Left ventricle myocardium superior (tissue), 1 donor: ENCODE measurements at regions of chr13 and their contacts with region 1.

Region 1: GRCh38 chr13:61148691-61149315 is 266.8 kb downstream of the PCDH20 start:
- DNase-seq: no peak
- ATAC-seq: peak; percentile 61

Region 2: DNA sequence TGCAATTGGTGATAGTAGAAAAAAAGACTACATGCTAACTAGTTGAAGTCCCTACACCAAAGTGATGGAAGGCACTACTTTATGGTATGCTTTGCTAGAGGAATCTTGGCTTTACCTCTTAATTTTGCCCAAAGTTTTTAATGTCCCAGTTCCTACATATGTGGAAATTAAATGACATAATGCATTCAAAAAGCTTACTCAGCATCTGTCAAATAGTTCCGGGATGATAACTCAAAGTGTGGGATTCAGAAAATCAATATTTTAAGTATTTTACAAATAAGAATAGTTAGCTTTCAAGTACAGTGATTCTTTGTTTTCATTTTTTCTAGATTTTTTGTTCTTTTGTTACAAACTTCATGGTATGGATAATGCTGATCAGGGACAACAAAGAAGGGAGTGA is 55.2 kb after region 1 on chr13:
- intact Hi-C with region 1: loop called (anchors 2 kb)
- DNase-seq: no peak
- ATAC-seq: no peak